ENCODE measurements at regions of chr17 and their contacts with region 1.

Region 1: GRCh38 chr17:55356434-55357328 is 65.0 kb downstream of the MMD start:
- DNase-seq: peak; percentile 74
- H3K4me3 ChIP-seq: no peak overlapping the region
- H3K27ac ChIP-seq: no peak overlapping the region
- H3K4me1 ChIP-seq: no peaks in the 10 kb centered on the region; a peak in 1 of 4 replicates
- H3K27me3 ChIP-seq: no peaks in the 10 kb centered on the region
- CTCF ChIP-seq: peak; percentile 97
- EP300 ChIP-seq: peak in 1 of 2 experiments; percentile 38; a peak in 1 of 4 replicates
- RAD21 ChIP-seq: peak; percentile 88

Region 2: DNA sequence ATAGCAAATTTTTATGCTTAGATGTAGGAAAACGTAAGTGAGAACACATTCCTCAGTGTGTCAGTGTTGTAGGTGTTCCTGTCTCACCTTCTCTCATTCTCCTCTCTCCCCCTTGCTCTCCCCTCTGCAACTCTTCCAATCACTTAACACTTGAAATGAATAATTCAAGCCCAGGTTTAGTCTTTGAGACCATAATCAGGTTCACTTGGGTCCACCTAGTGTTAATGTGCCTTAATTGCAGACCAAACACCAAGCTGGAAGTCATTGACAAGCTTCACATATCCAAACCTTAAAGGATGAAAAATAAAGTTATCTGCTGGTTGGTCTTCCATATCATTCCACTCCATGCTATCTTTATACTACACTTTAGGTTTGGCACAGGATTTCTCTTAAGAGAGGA is 351.2 kb before region 1 on chr17:
- CTCF ChIA-PET with region 1: interaction called, 13 read pairs
- POLR2A ChIA-PET with region 1: no interaction called
- DNase-seq: peak; percentile 20
- H3K4me3 ChIP-seq: no peak overlapping the region
- H3K27ac ChIP-seq: no peak overlapping the region
- H3K4me1 ChIP-seq: no peaks in the 10 kb centered on the region
- H3K27me3 ChIP-seq: no peaks in the 10 kb centered on the region
- CTCF ChIP-seq: peak; percentile 55
- EP300 ChIP-seq: no peak
- RAD21 ChIP-seq: peak; percentile 40

Region 3: GRCh38 chr17:55053855-55054254 is 302.8 kb before region 1 on chr17:
- CTCF ChIA-PET with region 1: interaction called, 12 read pairs
- POLR2A ChIA-PET with region 1: no interaction called
- DNase-seq: peak; percentile 3
- H3K4me3 ChIP-seq: no peak overlapping the region
- H3K27ac ChIP-seq: no peak overlapping the region
- H3K4me1 ChIP-seq: peaks cover 5% of the 10 kb centered on the region in 2 experiments; a peak in 3 of 4 replicates
- H3K27me3 ChIP-seq: no peaks in the 10 kb centered on the region
- CTCF ChIP-seq: peak; percentile 82
- EP300 ChIP-seq: no peak
- RAD21 ChIP-seq: peak; percentile 86

Region 4: GRCh38 chr17:55334285-55334684 is 22.4 kb before region 1 on chr17:
- CTCF ChIA-PET with region 1: interaction called, 10 read pairs
- POLR2A ChIA-PET with region 1: interaction called, 3 read pairs
- DNase-seq: no peak
- H3K4me3 ChIP-seq: no peak overlapping the region
- H3K27ac ChIP-seq: no peak overlapping the region
- H3K4me1 ChIP-seq: peaks cover 0 to 9% of the 10 kb centered on the region in 2 experiments; a peak in 1 of 4 replicates
- H3K27me3 ChIP-seq: no peaks in the 10 kb centered on the region
- CTCF ChIP-seq: no peak
- EP300 ChIP-seq: 0 out of 4 replicates have a peak, but pooled peaks of 1 of the 2 experiments have one; percentile 1
- RAD21 ChIP-seq: no peak

Region 5: DNA sequence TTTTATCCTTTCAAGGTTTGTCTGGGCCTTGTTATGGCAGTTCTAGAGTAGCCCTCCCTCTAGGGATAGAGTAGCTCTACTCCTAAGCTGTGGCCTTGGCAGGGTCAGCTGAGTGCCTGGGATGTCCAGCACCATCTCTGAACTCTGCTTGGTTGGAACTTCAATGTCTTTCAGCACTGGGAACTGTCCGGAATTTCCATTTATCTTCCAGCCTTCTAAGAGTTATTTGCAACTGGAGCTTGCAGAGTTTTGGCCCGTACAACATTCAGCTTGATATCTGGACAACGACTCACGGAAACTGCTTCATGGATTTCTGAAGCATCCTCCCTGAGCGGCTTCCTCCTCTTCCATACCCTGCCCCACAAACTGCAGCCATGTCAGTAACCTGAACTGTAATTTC is 42.0 kb after region 1 on chr17:
- CTCF ChIA-PET with region 1: interaction called, 12 read pairs
- POLR2A ChIA-PET with region 1: no interaction called
- DNase-seq: no peak
- H3K4me3 ChIP-seq: no peak overlapping the region
- H3K27ac ChIP-seq: no peak overlapping the region
- H3K4me1 ChIP-seq: no peaks in the 10 kb centered on the region; a peak in 1 of 4 replicates
- H3K27me3 ChIP-seq: no peaks in the 10 kb centered on the region
- CTCF ChIP-seq: no peak
- EP300 ChIP-seq: no peak
- RAD21 ChIP-seq: no peak